Dorsolateral prefrontal cortex (tissue), 120 donors: ENCODE measurements at regions of chr14 and their contacts with region 1.

Region 1: DNA sequence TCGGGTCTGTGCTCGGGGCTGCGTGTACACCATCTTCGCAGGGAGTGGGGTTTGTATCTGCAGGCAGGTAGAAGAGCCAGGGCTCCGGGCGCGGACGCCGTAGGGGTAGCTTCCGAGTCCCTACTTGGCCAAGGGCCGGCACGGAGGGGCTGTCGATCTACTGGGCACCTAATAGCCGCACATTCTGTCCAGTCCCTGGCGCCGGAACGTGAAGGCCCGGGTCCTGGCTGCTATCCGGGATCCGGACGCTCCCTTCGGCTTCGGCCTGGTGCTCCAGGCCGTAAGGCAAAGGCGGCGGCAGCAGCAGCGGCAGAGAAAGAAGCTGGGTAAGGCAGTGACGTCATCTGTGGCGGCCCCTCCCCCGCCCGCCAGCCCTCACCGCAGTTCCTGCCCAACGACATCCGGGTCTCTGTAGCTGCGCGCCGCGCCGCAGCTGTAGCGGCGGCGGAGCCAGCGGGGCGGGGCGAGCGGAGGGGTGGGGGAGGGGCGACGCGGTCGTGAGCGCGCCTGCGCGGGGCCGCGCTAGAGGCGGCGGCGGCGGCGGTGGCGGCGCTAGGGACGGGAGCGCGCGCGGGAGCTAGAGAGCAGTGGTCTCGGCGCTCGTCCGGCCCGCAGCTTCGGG is at the start of gene PPM1A:
- DNase-seq: peak; percentile 86 to 96 (median 93)
- H3K4me3 ChIP-seq: peak within 1 kb of the TSS; percentile 71 to 100 (median 89)
- H3K27ac ChIP-seq: peak within 1 kb of the TSS; percentile 95 to 100 (median 100)
- H3K27me3 ChIP-seq: no peaks in the 10 kb centered on the region
- CTCF ChIP-seq: peak in 6 of 56 donors; percentile 10 to 43 (median 16)
- total RNA-seq, gene PPM1A: 67.6 to 145 (median 112) TPM

Region 2: GRCh38 chr14:60091550-60092530 is 157.0 kb before region 1 on chr14 and contains the start of gene PCNX4:
- intact Hi-C with region 1: loop called (anchors 2 to 5 kb)
- DNase-seq: peak; percentile 93 to 98 (median 96)
- H3K4me3 ChIP-seq: peak within 1 kb of the TSS; percentile 67 to 98 (median 86)
- H3K27ac ChIP-seq: peak within 1 kb of the TSS; percentile 90 to 100 (median 98)
- H3K27me3 ChIP-seq: no peaks in the 10 kb centered on the region
- CTCF ChIP-seq: peak in 29 of 56 donors; percentile 3 to 47 (median 27)
- total RNA-seq, gene PCNX4: 40.1 to 76.5 (median 55.8) TPM

Region 3: DNA sequence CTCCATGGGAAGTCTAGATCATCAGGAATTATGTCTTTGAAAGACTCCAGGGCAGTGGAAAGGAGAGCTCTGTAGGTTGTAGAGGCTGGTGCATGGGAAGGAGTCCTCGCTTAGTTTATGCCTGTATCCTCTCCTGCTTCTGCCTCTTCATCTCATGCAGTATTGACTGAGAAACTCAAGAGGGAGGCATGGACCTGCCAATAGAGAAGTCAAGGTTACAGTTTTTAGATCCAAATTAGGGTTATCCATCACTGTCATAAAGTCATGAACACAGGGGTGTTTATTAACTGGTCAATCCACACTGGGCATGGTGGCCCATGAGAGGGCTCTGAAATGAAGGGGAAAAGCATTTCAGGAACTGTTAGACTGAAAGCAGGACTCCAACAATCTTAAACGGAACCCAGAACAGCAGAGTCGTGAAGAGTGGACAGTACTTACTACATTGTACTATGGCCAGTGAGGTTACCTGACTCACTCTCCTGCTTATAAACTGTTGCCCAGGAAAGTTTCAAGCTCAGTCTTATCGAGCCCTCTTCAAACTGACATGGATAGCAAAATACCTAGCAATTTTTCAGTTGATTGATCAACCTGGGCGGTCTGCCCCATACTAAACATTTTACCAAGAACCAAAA is 53.5 kb before region 1 on chr14:
- intact Hi-C with region 1: loop called in 1 of 2 experiments (anchors 10 kb)
- DNase-seq: no peak
- H3K4me3 ChIP-seq: no peak overlapping the region
- H3K27ac ChIP-seq: no peak overlapping the region
- H3K27me3 ChIP-seq: no peaks in the 10 kb centered on the region
- CTCF ChIP-seq: peak in 2 of 56 donors; percentile 11 to 13

Region 4: GRCh38 chr14:60212503-60213371 is 36.1 kb before region 1 on chr14:
- intact Hi-C with region 1: no loop called
- DNase-seq: no peak
- H3K4me3 ChIP-seq: no peak overlapping the region
- H3K27ac ChIP-seq: no peak overlapping the region
- H3K27me3 ChIP-seq: no peaks in the 10 kb centered on the region
- CTCF ChIP-seq: no peak

Region 5: DNA sequence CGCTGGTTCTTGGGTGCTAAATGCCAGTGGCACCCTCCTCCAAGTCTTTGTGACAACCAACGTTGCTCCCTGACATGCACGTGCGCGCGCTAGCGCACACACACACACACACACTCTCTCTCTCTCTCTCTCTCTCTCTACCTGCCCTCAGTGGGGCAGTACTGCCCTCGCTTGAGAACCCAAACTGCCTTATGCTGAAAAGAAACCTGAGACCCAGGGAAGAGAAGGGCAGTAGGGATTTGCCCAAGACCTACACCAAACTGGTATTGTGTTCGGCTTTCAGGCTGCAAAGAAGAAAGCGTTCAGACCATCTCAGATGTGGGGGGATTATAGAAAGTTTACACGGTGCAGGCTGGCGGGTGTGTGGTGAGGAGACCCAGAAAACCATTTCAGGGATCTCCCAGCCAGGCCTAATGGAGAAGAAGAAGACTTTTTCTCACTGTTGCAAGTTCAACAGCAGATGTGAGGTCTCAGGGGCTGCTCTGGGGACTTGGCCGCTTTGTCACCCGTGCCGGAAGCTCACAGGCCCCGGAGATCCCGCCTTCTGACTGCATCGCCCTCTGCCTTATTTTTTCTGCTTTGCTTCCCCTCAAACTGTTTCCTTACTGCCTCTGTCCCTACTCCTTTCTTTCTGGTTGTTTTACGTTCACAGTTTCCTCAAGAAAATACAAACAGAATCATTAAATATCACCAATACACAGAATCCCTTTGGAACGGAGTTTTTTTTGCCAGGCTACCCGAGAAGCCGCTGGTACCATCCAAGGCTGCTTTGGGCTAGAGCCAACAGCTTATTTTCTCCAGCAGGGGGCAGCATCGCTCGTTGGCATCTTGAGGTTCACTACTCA is 82.6 kb after region 1 on chr14:
- intact Hi-C with region 1: loop called (anchors 5 kb)
- DNase-seq: peak in 8 of 10 donors; percentile 7 to 76 (median 56)
- H3K4me3 ChIP-seq: peak overlapping the region; percentile 29 to 71 (median 53)
- H3K27ac ChIP-seq: peak overlapping the region in 4 of 59 donors; percentile 20 to 58 (median 21)
- H3K27me3 ChIP-seq: peaks cover 0 to 5% (median 0%) of the 10 kb centered on the region in 45 donors
- CTCF ChIP-seq: peak; percentile 58 to 86 (median 75)

Region 6: GRCh38 chr14:60363275-60363674 is 114.5 kb after region 1 on chr14:
- intact Hi-C with region 1: no loop called
- DNase-seq: no peak
- H3K4me3 ChIP-seq: no peak overlapping the region
- H3K27ac ChIP-seq: no peak overlapping the region
- H3K27me3 ChIP-seq: peaks cover 0 to 21% (median 0%) of the 10 kb centered on the region in 45 donors
- CTCF ChIP-seq: no peak

Region 7: DNA sequence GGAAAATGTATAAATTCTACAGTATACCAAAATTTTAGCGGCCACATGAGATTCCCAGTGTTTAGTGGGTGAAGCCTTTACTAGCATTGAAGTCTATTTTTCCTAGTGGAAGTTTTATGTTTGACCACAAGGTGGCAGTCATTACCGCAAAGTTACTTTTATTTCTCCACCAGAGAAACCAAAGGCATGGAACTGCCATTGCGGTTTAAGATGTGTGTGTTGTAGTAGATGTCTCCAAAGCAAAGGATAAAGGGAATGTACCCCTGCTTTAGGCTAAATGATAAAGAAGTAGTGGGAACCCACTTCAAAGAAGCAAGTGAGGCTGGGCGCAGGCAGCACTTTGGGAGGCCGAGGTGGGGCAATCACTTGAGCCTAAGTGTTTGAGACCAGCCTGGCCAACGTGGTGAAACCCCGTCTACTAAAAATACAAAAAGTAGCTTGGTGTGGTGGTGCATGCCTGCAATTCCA is 1213.0 kb after region 1 on chr14:
- intact Hi-C with region 1: no loop called
- DNase-seq: peak in 1 of 10 donors; percentile 53
- H3K4me3 ChIP-seq: no peak overlapping the region
- H3K27ac ChIP-seq: no peak overlapping the region
- H3K27me3 ChIP-seq: no peaks in the 10 kb centered on the region
- CTCF ChIP-seq: peak; percentile 80 to 99 (median 91)